ENCODE measurements at regions of chr10 and their contacts with region 1.

Region 1: GRCh38 chr10:32445740-32446535 is at the start of gene CCDC7:
- DNase-seq: peak; percentile 73 to 96 (median 83)
- ATAC-seq: peak; percentile 95
- H3K4me3 ChIP-seq: peak within 1 kb of the TSS; percentile 68 to 99
- H3K4me3 Mint-ChIP-seq: peak within 1 kb of the TSS; percentile 94
- H3K27ac ChIP-seq: peak within 1 kb of the TSS; percentile 91 to 98
- H3K27ac Mint-ChIP-seq: peak within 1 kb of the TSS; percentile 100
- H3K4me1 ChIP-seq: peaks cover 4% of the 10 kb centered on the region
- H3K4me1 Mint-ChIP-seq: peaks cover 28% of the 10 kb centered on the region
- H3K27me3 ChIP-seq: no peaks in the 10 kb centered on the region
- H3K27me3 Mint-ChIP-seq: no peaks in the 10 kb centered on the region
- CTCF ChIP-seq: peak; percentile 45
- total RNA-seq, gene CCDC7: 50.1 to 59.0 TPM

Region 2: GRCh38 chr10:31928549-31929260 is 517.2 kb before region 1 on chr10 and contains the start of gene ARHGAP12:
- CTCF ChIA-PET with region 1: no interaction called
- POLR2A ChIA-PET with region 1: no interaction called
- intact Hi-C with region 1: loop called in 1 of 2 experiments (anchors 10 kb)
- DNase-seq: peak; percentile 70 to 92 (median 84)
- ATAC-seq: peak; percentile 67
- H3K4me3 ChIP-seq: peak within 1 kb of the TSS; percentile 90 to 95
- H3K4me3 Mint-ChIP-seq: peak within 1 kb of the TSS; percentile 94
- H3K27ac ChIP-seq: peak within 1 kb of the TSS; percentile 65 to 87
- H3K27ac Mint-ChIP-seq: peak within 1 kb of the TSS; percentile 83
- H3K4me1 ChIP-seq: peaks cover 41% of the 10 kb centered on the region
- H3K4me1 Mint-ChIP-seq: peaks cover 49% of the 10 kb centered on the region
- H3K27me3 ChIP-seq: no peaks in the 10 kb centered on the region
- H3K27me3 Mint-ChIP-seq: no peaks in the 10 kb centered on the region
- CTCF ChIP-seq: no peak
- total RNA-seq, gene ARHGAP12: 15.7 to 15.9 TPM

Region 3: DNA sequence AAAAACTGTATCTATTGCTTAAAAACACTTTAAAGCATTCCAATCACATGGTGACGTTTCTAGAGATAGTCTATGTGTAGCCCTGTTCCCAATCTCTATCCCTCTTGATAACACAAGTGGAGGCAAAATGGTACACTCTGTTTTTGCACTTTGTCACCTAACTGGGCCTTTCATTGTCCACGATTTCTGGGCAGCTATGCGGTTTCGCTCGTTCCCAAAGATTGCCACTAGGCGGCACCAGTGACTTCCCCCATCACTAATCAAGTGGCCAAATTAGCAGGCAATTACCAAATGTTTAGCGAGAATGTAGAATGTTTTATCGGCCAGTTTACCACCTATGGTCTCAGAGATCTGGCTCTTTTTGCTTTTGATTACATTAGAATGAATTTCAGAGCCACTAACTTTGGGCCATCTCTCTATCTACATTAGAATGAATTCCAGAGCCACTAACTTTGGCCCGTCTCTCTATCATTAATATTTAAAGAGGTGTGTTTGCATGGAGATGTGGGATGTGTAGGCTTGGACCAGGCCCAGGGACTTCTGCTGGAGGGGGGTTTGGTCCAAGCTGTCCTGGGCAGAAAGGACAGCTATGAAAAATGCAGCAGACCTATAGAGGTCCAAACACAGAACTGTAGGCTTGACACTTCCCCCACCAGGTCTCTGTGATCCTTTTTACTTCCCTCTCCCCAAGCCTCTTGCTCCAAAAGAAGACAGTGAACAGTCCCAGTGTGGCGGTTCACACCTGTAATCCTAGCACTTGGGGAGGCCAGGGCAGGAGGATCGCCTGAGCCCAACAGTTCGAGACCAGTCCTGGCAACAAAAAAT is 189.1 kb before region 1 on chr10:
- CTCF ChIA-PET with region 1: interaction called, 3 read pairs
- POLR2A ChIA-PET with region 1: no interaction called
- intact Hi-C with region 1: loop called (anchors 10 kb)
- DNase-seq: peak; percentile 43 to 81 (median 67)
- ATAC-seq: peak; percentile 73
- H3K4me3 ChIP-seq: no peak overlapping the region
- H3K4me3 Mint-ChIP-seq: no peak overlapping the region
- H3K27ac ChIP-seq: no peak overlapping the region
- H3K27ac Mint-ChIP-seq: no peak overlapping the region
- H3K4me1 ChIP-seq: no peaks in the 10 kb centered on the region
- H3K4me1 Mint-ChIP-seq: peaks cover 5% of the 10 kb centered on the region
- H3K27me3 ChIP-seq: no peaks in the 10 kb centered on the region
- H3K27me3 Mint-ChIP-seq: no peaks in the 10 kb centered on the region
- CTCF ChIP-seq: peak; percentile 89

Region 4: DNA sequence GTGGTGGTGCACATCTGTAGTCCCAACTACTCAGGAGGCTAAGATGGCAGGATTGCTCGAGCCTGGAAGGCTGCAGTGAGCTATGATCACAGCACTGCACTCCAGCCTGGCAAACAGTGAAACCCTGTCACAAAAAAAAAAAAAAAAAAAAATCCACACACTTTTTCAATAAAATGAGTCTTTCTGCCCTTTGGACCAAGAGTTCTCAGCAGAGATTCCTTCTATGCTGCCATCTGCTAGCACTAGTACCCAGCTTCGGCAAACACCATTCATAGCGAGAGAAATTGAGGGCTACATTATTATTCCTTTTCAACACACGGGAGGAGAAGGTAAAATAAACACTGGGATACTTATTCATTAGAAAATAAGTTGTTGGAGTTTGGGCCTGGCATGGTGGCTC is 43.4 kb before region 1 on chr10:
- CTCF ChIA-PET with region 1: no interaction called
- POLR2A ChIA-PET with region 1: no interaction called
- intact Hi-C with region 1: no loop called
- DNase-seq: no peak
- ATAC-seq: no peak
- H3K4me3 ChIP-seq: no peak overlapping the region
- H3K4me3 Mint-ChIP-seq: no peak overlapping the region
- H3K27ac ChIP-seq: no peak overlapping the region
- H3K27ac Mint-ChIP-seq: no peak overlapping the region
- H3K4me1 ChIP-seq: no peaks in the 10 kb centered on the region
- H3K4me1 Mint-ChIP-seq: no peaks in the 10 kb centered on the region
- H3K27me3 ChIP-seq: no peaks in the 10 kb centered on the region
- H3K27me3 Mint-ChIP-seq: no peaks in the 10 kb centered on the region
- CTCF ChIP-seq: no peak

Region 5: DNA sequence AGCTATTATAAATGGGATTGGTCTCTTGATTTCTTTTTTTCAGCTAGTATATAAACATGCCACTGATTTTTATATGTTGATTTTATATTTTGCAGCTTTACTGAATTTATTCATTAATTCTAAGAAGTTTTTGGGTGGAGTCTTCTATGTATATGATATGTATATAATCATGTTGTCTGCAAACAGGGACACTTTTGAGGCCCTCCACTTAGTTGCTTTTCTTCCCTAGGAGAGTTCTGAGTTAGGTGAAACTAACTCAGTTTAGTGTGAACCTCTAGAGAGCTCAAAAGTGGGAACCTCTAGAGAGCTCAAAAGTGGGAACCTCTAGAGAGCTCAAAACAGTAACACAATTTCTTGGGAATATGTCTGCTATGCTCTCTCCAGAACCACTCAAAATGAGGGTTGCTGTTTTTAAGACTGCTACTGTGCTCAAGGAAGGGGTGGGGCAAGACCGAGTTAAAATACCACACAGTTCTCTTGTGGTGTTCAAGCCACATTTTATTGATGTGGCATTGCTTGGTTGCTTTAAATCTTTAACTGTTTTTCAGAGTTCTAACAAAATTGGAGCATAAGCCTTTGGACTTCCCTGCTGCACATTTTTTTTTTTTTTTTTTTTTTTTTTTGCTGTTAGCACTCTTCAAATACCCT is 13.2 kb after region 1 on chr10:
- CTCF ChIA-PET with region 1: interaction called, 7 read pairs
- POLR2A ChIA-PET with region 1: interaction called, 25 read pairs
- intact Hi-C with region 1: loop called (anchors 1 kb)
- DNase-seq: peak; percentile 13 to 89 (median 55)
- ATAC-seq: peak; percentile 97
- H3K4me3 ChIP-seq: peak overlapping the region in 1 of 2 experiments; percentile 31
- H3K4me3 Mint-ChIP-seq: peak overlapping the region; percentile 44
- H3K27ac ChIP-seq: peak overlapping the region; percentile 28 to 40
- H3K27ac Mint-ChIP-seq: peak overlapping the region; percentile 88
- H3K4me1 ChIP-seq: peaks cover 41% of the 10 kb centered on the region
- H3K4me1 Mint-ChIP-seq: peaks cover 49% of the 10 kb centered on the region
- H3K27me3 ChIP-seq: no peaks in the 10 kb centered on the region
- H3K27me3 Mint-ChIP-seq: no peaks in the 10 kb centered on the region
- CTCF ChIP-seq: no peak

Region 6: GRCh38 chr10:33134011-33134751 is 688.2 kb after region 1 on chr10:
- CTCF ChIA-PET with region 1: no interaction called
- POLR2A ChIA-PET with region 1: interaction called, 7 read pairs
- intact Hi-C with region 1: loop called (anchors 5 kb)
- DNase-seq: peak in 8 of 9 experiments; percentile 51 to 87 (median 72)
- ATAC-seq: peak; percentile 67
- H3K4me3 ChIP-seq: no peak overlapping the region
- H3K4me3 Mint-ChIP-seq: no peak overlapping the region
- H3K27ac ChIP-seq: peak overlapping the region; percentile 30 to 55
- H3K27ac Mint-ChIP-seq: peak overlapping the region; percentile 66
- H3K4me1 ChIP-seq: peaks cover 48% of the 10 kb centered on the region
- H3K4me1 Mint-ChIP-seq: peaks cover 70% of the 10 kb centered on the region
- H3K27me3 ChIP-seq: no peaks in the 10 kb centered on the region
- H3K27me3 Mint-ChIP-seq: no peaks in the 10 kb centered on the region
- CTCF ChIP-seq: no peak